ENCODE measurements at regions of chr5 and their contacts with region 1.

Region 1: GRCh38 chr5:154189819-154190594 is 526 bp upstream of the GALNT10 start:
- DNase-seq: peak; percentile 93
- ATAC-seq: peak; percentile 90

Region 2: GRCh38 chr5:154077696-154078095 is 112.3 kb before region 1 on chr5:
- intact Hi-C with region 1: loop called (anchors 5 kb)
- DNase-seq: no peak
- ATAC-seq: peak; percentile 87

Region 3: GRCh38 chr5:154287136-154287535 is 97.1 kb after region 1 on chr5:
- intact Hi-C with region 1: loop called (anchors 5 kb)
- DNase-seq: no peak
- ATAC-seq: peak; percentile 33